ENCODE measurements at regions of chr1 and their contacts with region 1.

Region 1: GRCh38 chr1:111222308-111223125 is 5.0 kb upstream of the CHI3L2 start:
- DNase-seq: peak; percentile 81
- ATAC-seq: peak; percentile 57
- H3K4me3 ChIP-seq: peak overlapping the region; percentile 23; the same call in 1 of the 2 replicates
- H3K27ac ChIP-seq: peak overlapping the region; percentile 100
- H3K4me1 ChIP-seq: peaks cover 88% of the 10 kb centered on the region
- H3K27me3 ChIP-seq: no peaks in the 10 kb centered on the region
- CTCF ChIP-seq: peak; percentile 96 to 97 (median 96); a peak in 5 of 6 replicates
- EP300 ChIP-seq: no peak
- POLR2A ChIP-seq: no peak
- RAD21 ChIP-seq: peak; percentile 99

Region 2: DNA sequence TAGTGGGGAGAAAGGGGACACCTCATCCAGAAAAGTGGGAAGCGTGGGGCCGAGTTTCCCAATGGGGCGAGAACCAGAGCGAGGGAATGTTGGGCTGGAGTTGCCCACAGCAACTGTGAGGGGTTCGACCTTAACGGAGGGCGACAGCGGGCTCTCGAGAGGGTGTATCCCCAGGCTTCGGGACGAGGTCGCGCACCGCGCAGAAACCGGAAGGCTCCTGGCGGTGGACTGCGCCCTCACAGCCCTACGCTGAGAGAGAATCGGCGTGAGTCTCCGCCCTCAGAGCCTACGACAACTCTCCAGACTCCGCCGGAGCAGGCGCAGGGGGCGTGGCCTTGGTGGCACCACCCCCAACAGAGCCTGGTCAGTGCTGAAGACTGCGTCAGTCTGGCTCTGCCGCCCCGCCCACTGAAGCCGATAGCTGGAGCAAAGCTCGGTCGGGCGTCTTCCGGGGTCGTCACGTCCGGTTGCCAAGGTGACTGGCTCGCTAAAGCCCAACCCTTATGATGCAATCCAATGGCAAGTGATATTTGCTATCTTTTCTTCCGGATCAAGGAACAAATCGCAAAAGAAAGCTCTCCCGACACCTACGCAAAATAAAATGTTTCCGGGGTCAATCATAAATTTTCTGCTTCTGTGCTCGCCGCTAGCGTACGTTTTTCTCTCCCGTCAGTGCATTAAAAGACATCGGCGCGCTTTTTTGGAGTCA is 258.7 kb before region 1 on chr1 and contains the start of gene LRIF1:
- CTCF ChIA-PET with region 1: no interaction called
- POLR2A ChIA-PET with region 1: no interaction called
- RAD21 ChIA-PET with region 1: no interaction called
- SMC1A ChIA-PET with region 1: interaction called, 3 read pairs
- in situ Hi-C with region 1: no loop called
- intact Hi-C with region 1: loop called (anchors 5 kb)
- DNase-seq: peak; percentile 99
- ATAC-seq: peak; percentile 98
- H3K4me3 ChIP-seq: peak within 1 kb of the TSS; percentile 75
- H3K27ac ChIP-seq: peak within 1 kb of the TSS; percentile 91
- H3K4me1 ChIP-seq: 0 out of 2 replicates have a peak, but pooled peaks cover 6% of the 10 kb centered on the region
- H3K27me3 ChIP-seq: no peaks in the 10 kb centered on the region
- CTCF ChIP-seq: peak; percentile 25 to 51 (median 39); a peak in 4 of 6 replicates
- EP300 ChIP-seq: no peak
- POLR2A ChIP-seq: peak; percentile 100
- RAD21 ChIP-seq: no peak
- polyA plus RNA-seq, gene LRIF1: 15.4 to 16.1 TPM

Region 3: DNA sequence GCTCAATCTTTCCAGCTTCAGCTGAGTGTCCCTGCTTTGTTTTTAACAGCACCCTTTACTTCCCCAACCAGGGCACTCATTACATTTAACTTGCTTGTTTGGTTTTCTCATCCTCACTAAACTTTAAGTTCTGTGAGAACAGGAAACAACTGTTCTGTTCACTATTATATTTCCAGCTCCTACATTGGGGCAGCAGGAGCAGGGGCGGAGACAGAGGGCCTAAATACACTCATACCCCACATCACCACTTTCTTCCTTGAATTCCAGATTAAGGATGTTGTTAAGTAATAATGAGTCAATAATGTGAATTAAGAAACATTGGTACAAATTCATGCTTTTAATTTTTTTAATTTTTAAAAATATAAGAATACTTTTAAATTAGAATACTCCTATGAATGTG is 88.7 kb before region 1 on chr1:
- CTCF ChIA-PET with region 1: interaction called, 36 read pairs
- POLR2A ChIA-PET with region 1: interaction called, 19 read pairs
- RAD21 ChIA-PET with region 1: interaction called, 109 read pairs
- SMC1A ChIA-PET with region 1: interaction called, 164 read pairs
- in situ Hi-C with region 1: no loop called
- intact Hi-C with region 1: no loop called
- DNase-seq: no peak
- ATAC-seq: no peak
- H3K4me3 ChIP-seq: no peak overlapping the region
- H3K27ac ChIP-seq: peak overlapping the region; percentile 52
- H3K4me1 ChIP-seq: peaks cover 44% of the 10 kb centered on the region
- H3K27me3 ChIP-seq: no peaks in the 10 kb centered on the region
- CTCF ChIP-seq: no peak
- EP300 ChIP-seq: no peak
- POLR2A ChIP-seq: no peak
- RAD21 ChIP-seq: no peak

Region 4: DNA sequence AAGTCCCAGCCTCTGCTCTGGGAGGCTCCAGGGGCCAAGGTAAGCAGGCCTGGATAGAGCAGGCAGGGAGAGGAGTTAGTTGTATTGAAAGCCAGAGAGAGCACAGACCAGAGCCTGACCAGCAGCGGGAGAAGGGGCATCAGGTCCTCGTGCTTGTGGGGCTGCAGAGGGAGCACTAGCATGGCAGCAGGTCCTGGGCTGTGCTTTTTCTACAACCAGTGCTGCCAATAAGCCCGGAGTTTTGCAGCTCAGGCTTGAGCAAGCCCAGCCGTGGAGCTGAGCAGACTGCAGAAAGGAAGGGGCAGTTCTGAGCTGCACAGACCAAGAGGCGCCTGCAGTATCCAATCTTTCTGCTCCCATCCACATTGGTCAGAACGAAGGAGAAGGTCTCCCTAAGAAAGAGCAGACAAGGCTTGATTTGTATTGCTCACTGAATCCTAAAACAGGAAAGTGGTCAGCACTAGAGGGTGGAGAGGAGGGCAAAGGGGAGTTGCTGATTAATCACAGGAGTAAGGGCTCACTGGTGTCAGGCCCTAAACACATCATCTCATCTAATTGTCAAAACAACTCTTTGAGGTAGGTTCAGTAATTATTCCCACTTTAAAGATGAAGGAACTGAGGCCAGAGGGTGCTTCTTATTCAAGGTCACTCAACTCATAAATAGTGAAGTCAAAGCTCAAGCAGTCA is 24.8 kb before region 1 on chr1:
- CTCF ChIA-PET with region 1: interaction called, 239 read pairs
- POLR2A ChIA-PET with region 1: interaction called, 371 read pairs
- RAD21 ChIA-PET with region 1: interaction called, 542 read pairs
- SMC1A ChIA-PET with region 1: interaction called, 284 read pairs
- in situ Hi-C with region 1: no loop called
- intact Hi-C with region 1: no loop called
- DNase-seq: no peak
- ATAC-seq: peak; percentile 28
- H3K4me3 ChIP-seq: peak overlapping the region; percentile 73
- H3K27ac ChIP-seq: peak overlapping the region; percentile 92
- H3K4me1 ChIP-seq: peaks cover 40% of the 10 kb centered on the region
- H3K27me3 ChIP-seq: no peaks in the 10 kb centered on the region
- CTCF ChIP-seq: peak; percentile 54 to 65 (median 55)
- EP300 ChIP-seq: no peak
- POLR2A ChIP-seq: no peak
- RAD21 ChIP-seq: peak; percentile 58

Region 5: DNA sequence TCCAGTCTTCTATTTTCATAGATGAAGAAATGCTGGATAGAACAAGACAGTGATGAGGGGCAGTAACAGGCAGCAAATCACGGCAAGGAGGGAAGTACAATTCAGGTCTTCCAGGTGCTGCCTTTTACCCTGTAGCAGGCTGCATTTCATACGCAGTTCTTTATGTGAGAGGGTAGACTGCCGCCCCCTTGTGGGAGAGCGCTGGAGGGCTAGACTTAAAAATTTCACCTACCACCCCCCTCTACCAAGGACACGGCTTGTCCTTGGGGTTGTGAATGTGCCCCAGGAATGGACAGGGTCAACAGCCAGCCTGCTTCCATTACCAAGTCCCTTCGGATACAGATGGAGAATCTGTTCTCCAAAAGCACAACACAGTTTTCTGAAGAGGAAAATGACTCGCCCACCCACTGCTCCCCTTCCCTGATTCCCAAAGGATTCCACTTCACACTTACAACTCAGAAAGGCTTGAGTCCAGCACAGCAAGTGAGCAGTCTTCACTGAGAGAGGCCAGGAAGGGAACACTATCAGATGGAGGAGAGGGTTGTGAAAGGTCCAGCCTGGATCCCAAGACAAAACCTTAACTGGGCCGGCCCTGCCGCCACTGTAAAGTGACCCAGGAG is 219.2 kb after region 1 on chr1:
- CTCF ChIA-PET with region 1: interaction called, 8 read pairs
- POLR2A ChIA-PET with region 1: no interaction called
- RAD21 ChIA-PET with region 1: interaction called, 5 read pairs
- SMC1A ChIA-PET with region 1: interaction called, 5 read pairs
- in situ Hi-C with region 1: no loop called
- intact Hi-C with region 1: loop called (anchors 2 kb)
- DNase-seq: no peak
- ATAC-seq: peak; percentile 81
- H3K4me3 ChIP-seq: no peak overlapping the region
- H3K27ac ChIP-seq: no peak overlapping the region
- H3K4me1 ChIP-seq: peaks cover 10% of the 10 kb centered on the region
- H3K27me3 ChIP-seq: no peaks in the 10 kb centered on the region
- CTCF ChIP-seq: peak; percentile 55 to 65 (median 56)
- EP300 ChIP-seq: no peak
- POLR2A ChIP-seq: no peak
- RAD21 ChIP-seq: peak; percentile 52

Region 6: GRCh38 chr1:111516005-111516535 is 293.6 kb after region 1 on chr1:
- CTCF ChIA-PET with region 1: no interaction called
- POLR2A ChIA-PET with region 1: no interaction called
- RAD21 ChIA-PET with region 1: no interaction called
- SMC1A ChIA-PET with region 1: no interaction called
- in situ Hi-C with region 1: no loop called
- intact Hi-C with region 1: no loop called
- DNase-seq: no peak
- ATAC-seq: peak; percentile 42
- H3K4me3 ChIP-seq: peak overlapping the region; percentile 45; the same call in 1 of the 2 replicates
- H3K27ac ChIP-seq: peak overlapping the region; percentile 33
- H3K4me1 ChIP-seq: peaks cover 36% of the 10 kb centered on the region
- H3K27me3 ChIP-seq: no peaks in the 10 kb centered on the region; a peak in 1 of 4 replicates
- CTCF ChIP-seq: peak; percentile 12 to 50 (median 34); a peak in 5 of 6 replicates
- EP300 ChIP-seq: no peak
- POLR2A ChIP-seq: no peak
- RAD21 ChIP-seq: no peak

Region 7: DNA sequence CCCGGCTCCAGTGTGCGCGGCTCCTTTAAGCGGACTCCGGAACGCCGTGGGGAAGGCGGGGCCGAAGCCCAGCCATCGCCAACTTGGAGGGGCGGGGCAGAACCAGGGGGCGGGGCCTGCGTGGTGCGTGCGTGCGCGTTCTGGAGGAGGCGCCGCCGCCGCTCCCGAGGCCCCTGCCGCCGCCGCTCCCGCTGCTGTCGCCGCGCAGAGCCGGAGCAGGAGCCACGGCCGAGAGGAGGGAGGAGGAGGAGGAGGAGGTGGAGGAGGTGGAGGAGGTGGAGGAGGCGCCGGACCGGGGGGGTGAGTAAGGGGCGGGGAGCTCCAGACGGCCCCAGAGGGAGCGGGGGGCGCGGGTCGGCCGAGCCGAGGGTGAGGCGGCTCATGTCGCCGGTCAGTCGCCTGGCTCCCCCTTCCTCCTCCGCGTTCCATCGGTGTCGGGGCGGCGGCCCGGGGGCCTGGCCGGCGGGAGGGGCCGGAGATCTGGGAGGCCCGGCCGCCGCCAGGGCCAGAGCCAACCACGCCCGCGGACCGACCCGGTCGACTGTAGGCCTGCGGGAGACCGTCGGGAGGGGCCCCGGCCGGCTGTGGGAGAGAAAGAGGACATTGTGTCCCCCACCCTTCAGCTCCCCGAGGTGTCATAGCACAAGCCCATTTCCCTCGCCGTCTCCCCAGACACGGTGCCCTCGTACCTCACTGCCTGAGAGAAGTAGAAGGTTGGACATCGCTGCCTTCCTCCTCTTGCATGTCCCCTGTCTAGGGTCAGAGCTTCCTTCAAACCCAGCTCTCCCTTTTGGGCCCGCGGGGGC is 397.3 kb after region 1 on chr1 and contains the start of gene RAP1A:
- CTCF ChIA-PET with region 1: no interaction called
- POLR2A ChIA-PET with region 1: no interaction called
- RAD21 ChIA-PET with region 1: no interaction called
- SMC1A ChIA-PET with region 1: interaction called, 3 read pairs
- in situ Hi-C with region 1: no loop called
- intact Hi-C with region 1: loop called (anchors 2 kb)
- DNase-seq: peak; percentile 55
- ATAC-seq: peak; percentile 64
- H3K4me3 ChIP-seq: peak within 1 kb of the TSS; percentile 87
- H3K27ac ChIP-seq: peak within 1 kb of the TSS; percentile 94
- H3K4me1 ChIP-seq: peaks cover 34% of the 10 kb centered on the region
- H3K27me3 ChIP-seq: no peaks in the 10 kb centered on the region
- CTCF ChIP-seq: no peak
- EP300 ChIP-seq: no peak
- POLR2A ChIP-seq: peak; percentile 84
- RAD21 ChIP-seq: no peak
- polyA plus RNA-seq, gene RAP1A: 71.8 to 93.7 TPM